WTC11 (cell line): ENCODE measurements at regions of chr3 and their contacts with region 1.

Region 1: GRCh38 chr3:49912881-49913281 is 9.2 kb upstream of the MST1R start:
- DNase-seq: no peak
- ATAC-seq: no peak
- H3K4me3 Mint-ChIP-seq: no peak overlapping the region
- H3K27ac Mint-ChIP-seq: peak overlapping the region; percentile 57; the same call in 1 of the 2 replicates
- H3K4me1 Mint-ChIP-seq: peaks cover 27% of the 10 kb centered on the region
- H3K27me3 Mint-ChIP-seq: peaks cover 11% of the 10 kb centered on the region
- CTCF ChIP-seq: no peak

Region 2: DNA sequence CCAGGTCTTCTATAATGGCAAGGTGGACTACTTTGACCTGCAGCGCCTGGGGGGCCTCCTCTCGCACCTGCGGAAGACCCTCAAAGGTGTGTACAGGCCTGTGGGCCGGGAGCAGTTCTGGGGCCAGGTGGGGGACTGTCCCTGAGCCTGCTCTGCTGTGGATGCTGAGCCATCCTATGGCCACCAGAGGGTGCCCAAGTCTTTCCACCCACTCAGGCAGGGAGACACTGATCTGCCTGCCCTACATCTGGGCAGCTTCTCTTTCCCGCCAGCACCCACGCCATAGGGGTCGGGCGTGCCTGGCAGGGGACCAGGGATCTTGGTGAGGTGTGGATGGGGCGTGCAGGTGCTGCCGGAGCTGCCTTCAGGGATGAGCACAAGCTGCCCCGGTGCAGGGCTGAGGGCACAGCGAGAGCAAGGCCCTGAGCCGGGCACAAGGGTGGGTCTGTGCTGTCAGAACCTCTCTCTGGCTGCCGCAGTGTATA is 209.4 kb before region 1 on chr3:
- CTCF ChIA-PET with region 1: interaction called, 13 read pairs
- POLR2A ChIA-PET with region 1: interaction called, 3 read pairs
- DNase-seq: peak; percentile 75
- ATAC-seq: peak; percentile 91
- H3K4me3 Mint-ChIP-seq: no peak overlapping the region
- H3K27ac Mint-ChIP-seq: no peak overlapping the region; the same call in 1 of the 2 replicates
- H3K4me1 Mint-ChIP-seq: peaks cover 16% of the 10 kb centered on the region
- H3K27me3 Mint-ChIP-seq: no peaks in the 10 kb centered on the region
- CTCF ChIP-seq: peak; percentile 70

Region 3: GRCh38 chr3:49844464-49845183 is 68.3 kb before region 1 on chr3:
- CTCF ChIA-PET with region 1: interaction called, 16 read pairs
- POLR2A ChIA-PET with region 1: no interaction called
- DNase-seq: no peak
- ATAC-seq: no peak
- H3K4me3 Mint-ChIP-seq: no peak overlapping the region
- H3K27ac Mint-ChIP-seq: no peak overlapping the region
- H3K4me1 Mint-ChIP-seq: peaks cover 17% of the 10 kb centered on the region
- H3K27me3 Mint-ChIP-seq: no peaks in the 10 kb centered on the region
- CTCF ChIP-seq: no peak

Region 4: DNA sequence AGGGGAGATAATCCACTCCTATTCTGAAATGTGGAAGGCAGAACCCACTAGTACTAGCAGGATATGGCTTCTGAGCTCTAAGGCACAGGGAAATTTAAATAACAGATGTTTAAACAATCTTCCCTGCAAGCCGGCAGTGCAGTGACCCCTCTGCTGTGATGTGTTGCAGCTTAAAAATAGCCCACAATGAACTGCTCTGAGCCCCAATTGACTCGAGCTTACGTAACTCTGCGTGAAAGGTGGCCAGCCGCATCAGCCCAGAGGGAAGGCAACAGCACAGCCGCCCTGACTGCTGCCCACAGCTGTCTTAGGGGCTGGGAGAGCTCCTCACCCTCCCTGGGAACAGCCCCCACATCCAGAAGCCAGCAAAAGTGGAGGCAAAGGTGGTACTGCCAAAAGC is 30.7 kb before region 1 on chr3:
- CTCF ChIA-PET with region 1: interaction called, 19 read pairs
- POLR2A ChIA-PET with region 1: interaction called, 4 read pairs
- DNase-seq: no peak
- ATAC-seq: no peak
- H3K4me3 Mint-ChIP-seq: no peak overlapping the region
- H3K27ac Mint-ChIP-seq: no peak overlapping the region; the same call in 1 of the 2 replicates
- H3K4me1 Mint-ChIP-seq: peaks cover 29% of the 10 kb centered on the region
- H3K27me3 Mint-ChIP-seq: no peaks in the 10 kb centered on the region
- CTCF ChIP-seq: no peak

Region 5: GRCh38 chr3:49929331-49930240 is 16.7 kb after region 1 on chr3 and contains the start of gene MON1A:
- CTCF ChIA-PET with region 1: interaction called, 88 read pairs
- POLR2A ChIA-PET with region 1: interaction called, 19 read pairs
- DNase-seq: peak; percentile 99
- ATAC-seq: peak; percentile 87
- H3K4me3 Mint-ChIP-seq: peak within 1 kb of the TSS; percentile 90
- H3K27ac Mint-ChIP-seq: peak within 1 kb of the TSS; percentile 98
- H3K4me1 Mint-ChIP-seq: peaks cover 25% of the 10 kb centered on the region
- H3K27me3 Mint-ChIP-seq: no peaks in the 10 kb centered on the region
- CTCF ChIP-seq: no peak
- total RNA-seq, gene MON1A: 6.6 to 8.6 TPM (median 7.0 TPM) in 3 replicates

Region 6: GRCh38 chr3:50270422-50271217 is 357.7 kb after region 1 on chr3:
- CTCF ChIA-PET with region 1: no interaction called
- POLR2A ChIA-PET with region 1: no interaction called
- DNase-seq: no peak
- ATAC-seq: no peak
- H3K4me3 Mint-ChIP-seq: no peak overlapping the region
- H3K27ac Mint-ChIP-seq: no peak overlapping the region
- H3K4me1 Mint-ChIP-seq: peaks cover 52% of the 10 kb centered on the region
- H3K27me3 Mint-ChIP-seq: peaks cover 28% of the 10 kb centered on the region
- CTCF ChIP-seq: no peak